Activated CD8-positive, alpha-beta T cell treated with anti-CD3 and anti-CD28 coated beads, Interleukin-2, amount 10 ng/mL, durations not matched to agents 7 days and 5 days (primary cell): ENCODE measurements at regions of chr13 and their contacts with region 1.

Region 1: DNA sequence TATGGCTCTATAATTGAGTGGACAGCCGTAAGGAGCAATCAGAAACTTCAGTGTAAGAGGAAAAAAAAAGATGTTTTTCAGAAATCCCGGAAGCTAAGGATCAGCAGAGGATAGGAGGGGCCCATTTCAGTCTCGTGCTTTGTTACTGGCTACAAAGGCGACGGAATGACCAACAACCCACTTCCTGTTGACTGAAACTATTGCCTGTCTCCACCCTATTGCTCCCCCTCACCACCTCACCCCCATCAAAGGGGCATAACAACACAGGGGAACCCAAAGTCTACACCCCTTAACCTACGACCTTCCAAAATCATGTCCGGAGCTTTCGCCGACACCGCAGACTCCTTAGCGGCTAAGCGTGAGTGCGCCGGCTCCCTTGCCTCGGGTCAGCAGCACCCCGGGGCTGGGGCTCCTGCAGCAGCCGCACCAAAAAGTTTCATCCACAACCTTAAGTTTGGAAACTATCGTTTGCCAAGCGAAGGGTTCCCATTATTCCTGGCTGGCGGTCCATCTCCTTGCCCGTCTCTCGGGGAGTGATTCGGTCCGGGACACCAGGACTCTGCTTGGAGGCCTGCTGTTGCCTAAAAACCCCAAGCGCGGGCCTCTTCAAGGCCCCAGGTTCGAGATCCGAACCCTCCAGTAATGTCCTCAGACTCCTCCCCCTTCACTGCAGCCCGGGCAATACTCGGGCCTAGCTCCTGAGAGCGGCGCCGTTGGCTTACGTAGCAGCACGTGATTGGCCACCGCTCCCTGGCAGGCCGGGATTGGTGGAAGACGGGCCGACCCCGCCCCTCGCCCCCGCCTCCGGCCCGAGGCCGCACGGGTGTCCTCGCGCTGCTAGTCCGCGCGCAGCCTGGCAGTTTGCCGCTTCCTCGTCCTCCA is at the start of gene TPP2:
- DNase-seq: peak; percentile 98
- ATAC-seq: peak; percentile 92
- H3K4me3 Mint-ChIP-seq: peak within 1 kb of the TSS; percentile 99
- H3K27ac Mint-ChIP-seq: peak within 1 kb of the TSS; percentile 100
- H3K4me1 Mint-ChIP-seq: peaks cover 60% of the 10 kb centered on the region
- H3K27me3 Mint-ChIP-seq: no peaks in the 10 kb centered on the region
- total RNA-seq, gene TPP2: 77.8 to 85.4 TPM

Region 2: DNA sequence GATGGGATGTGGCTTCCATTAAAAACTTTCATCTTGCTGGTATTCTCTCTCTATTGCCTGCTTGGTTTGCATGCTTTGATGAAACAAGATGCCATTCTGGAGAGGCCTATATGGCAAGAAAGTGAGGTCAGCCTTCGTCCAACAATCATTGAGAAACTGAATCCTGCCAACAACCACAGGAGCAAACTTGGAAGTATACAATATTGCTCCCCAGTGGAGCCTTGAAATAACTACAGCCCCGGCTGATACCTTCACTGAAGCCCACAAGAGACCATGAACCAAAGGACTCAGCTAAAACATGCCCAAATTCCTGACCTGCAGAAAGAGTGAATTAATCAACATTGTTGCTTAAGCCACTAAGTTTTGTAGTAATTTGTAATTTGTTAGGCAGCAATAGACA is 112.1 kb before region 1 on chr13:
- CTCF ChIA-PET with region 1: no interaction called
- POLR2A ChIA-PET with region 1: no interaction called
- DNase-seq: no peak
- ATAC-seq: no peak
- H3K4me3 Mint-ChIP-seq: no peak overlapping the region
- H3K27ac Mint-ChIP-seq: no peak overlapping the region
- H3K4me1 Mint-ChIP-seq: no peaks in the 10 kb centered on the region
- H3K27me3 Mint-ChIP-seq: peaks cover 5% of the 10 kb centered on the region

Region 3: DNA sequence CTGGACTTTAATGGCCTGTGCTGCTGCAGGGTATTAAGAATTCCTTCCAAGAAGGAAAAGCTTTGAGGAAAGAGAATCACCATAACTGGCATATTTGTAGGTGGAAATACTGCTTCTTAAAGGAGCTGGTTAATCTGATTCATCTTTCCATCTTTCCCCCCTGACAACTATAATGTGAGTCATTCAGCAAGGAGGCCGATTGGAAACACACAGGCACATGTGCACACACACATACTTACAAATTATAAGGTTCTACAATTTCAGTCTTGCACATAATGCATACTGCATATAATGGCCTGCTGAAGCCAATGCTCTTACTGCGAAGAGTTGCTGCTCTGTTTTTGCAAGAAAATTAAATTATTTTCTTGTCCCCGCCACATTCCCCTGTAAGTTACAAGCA is 78.4 kb before region 1 on chr13:
- CTCF ChIA-PET with region 1: no interaction called
- POLR2A ChIA-PET with region 1: no interaction called
- DNase-seq: no peak
- ATAC-seq: no peak
- H3K4me3 Mint-ChIP-seq: no peak overlapping the region
- H3K27ac Mint-ChIP-seq: no peak overlapping the region
- H3K4me1 Mint-ChIP-seq: no peaks in the 10 kb centered on the region
- H3K27me3 Mint-ChIP-seq: no peaks in the 10 kb centered on the region

Region 4: DNA sequence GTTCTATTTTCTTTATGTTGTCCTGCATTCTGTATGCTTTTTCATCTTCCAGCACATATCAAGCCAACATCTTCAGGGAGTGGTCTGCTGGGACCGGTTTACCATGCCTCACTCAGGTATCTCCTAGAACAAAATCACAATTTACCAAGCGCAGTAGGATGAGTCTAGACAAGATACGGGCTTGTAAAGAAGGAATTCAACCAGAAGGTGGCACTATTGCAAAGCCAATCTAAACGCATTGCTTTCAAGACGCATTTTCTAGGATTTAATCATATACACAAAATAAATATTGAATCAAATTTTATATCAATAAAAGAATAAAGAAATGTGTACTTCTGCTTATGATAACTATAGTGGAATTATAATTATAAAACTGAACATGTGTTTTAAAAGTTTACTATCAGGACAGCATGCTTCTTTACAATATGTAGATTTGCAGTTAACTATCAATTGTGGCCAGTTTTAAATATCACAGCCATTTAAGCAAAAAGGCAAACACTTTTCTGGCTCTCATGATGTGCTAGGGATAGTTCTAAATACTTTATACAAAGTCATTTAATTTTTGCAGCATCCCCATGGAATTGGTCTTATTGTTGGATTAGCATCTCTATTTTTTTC is 15.7 kb before region 1 on chr13:
- CTCF ChIA-PET with region 1: interaction called, 50 read pairs
- POLR2A ChIA-PET with region 1: interaction called, 9 read pairs
- DNase-seq: peak; percentile 66
- ATAC-seq: peak; percentile 81
- H3K4me3 Mint-ChIP-seq: no peak overlapping the region
- H3K27ac Mint-ChIP-seq: no peak overlapping the region
- H3K4me1 Mint-ChIP-seq: peaks cover 21% of the 10 kb centered on the region
- H3K27me3 Mint-ChIP-seq: peaks cover 8% of the 10 kb centered on the region

Region 5: GRCh38 chr13:102620516-102620915 is 24.1 kb after region 1 on chr13:
- CTCF ChIA-PET with region 1: interaction called, 10 read pairs
- POLR2A ChIA-PET with region 1: interaction called, 8 read pairs
- DNase-seq: no peak
- ATAC-seq: no peak
- H3K4me3 Mint-ChIP-seq: no peak overlapping the region
- H3K27ac Mint-ChIP-seq: no peak overlapping the region
- H3K4me1 Mint-ChIP-seq: no peaks in the 10 kb centered on the region
- H3K27me3 Mint-ChIP-seq: no peaks in the 10 kb centered on the region

Region 6: GRCh38 chr13:102773441-102774215 is 177.2 kb after region 1 on chr13 and contains the start of gene TEX30:
- CTCF ChIA-PET with region 1: interaction called, 10 read pairs
- POLR2A ChIA-PET with region 1: interaction called, 25 read pairs
- DNase-seq: peak; percentile 89
- ATAC-seq: peak; percentile 96
- H3K4me3 Mint-ChIP-seq: peak within 1 kb of the TSS; percentile 84
- H3K27ac Mint-ChIP-seq: peak within 1 kb of the TSS; percentile 92
- H3K4me1 Mint-ChIP-seq: peaks cover 63% of the 10 kb centered on the region
- H3K27me3 Mint-ChIP-seq: no peaks in the 10 kb centered on the region
- total RNA-seq, gene TEX30: 40.1 to 43.3 TPM

Region 7: DNA sequence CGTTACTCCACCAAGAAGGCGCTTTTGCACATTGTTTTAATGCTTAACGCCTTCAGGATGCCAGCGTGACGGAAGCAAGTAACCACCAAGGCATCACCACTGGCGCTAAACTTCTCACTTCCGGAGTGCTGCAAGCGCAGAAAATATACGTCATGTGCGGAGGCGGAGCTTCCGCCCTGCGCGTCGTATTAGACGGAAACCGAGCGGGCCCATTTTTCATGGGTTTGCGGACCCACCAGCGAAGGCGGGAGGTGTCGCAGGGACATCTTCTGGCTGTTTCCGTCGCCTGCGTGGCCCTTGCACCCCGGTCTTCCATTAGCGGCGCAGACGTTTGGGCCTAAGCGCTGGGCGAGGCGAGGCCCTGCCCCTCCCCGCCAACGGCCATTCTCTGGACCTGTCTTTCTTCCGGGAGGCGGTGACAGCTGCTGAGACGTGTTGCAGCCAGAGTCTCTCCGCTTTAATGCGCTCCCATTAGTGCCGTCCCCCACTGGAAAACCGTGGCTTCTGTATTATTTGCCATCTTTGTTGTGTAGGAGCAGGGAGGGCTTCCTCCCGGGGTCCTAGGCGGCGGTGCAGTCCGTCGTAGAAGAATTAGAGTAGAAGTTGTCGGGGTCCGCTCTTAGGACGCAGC is 249.4 kb after region 1 on chr13 and contains the start of gene ERCC5:
- CTCF ChIA-PET with region 1: interaction called, 39 read pairs
- POLR2A ChIA-PET with region 1: interaction called, 98 read pairs
- DNase-seq: peak; percentile 97
- ATAC-seq: peak; percentile 85
- H3K4me3 Mint-ChIP-seq: peak within 1 kb of the TSS; percentile 87
- H3K27ac Mint-ChIP-seq: peak within 1 kb of the TSS; percentile 93
- H3K4me1 Mint-ChIP-seq: peaks cover 37% of the 10 kb centered on the region
- H3K27me3 Mint-ChIP-seq: no peaks in the 10 kb centered on the region
- total RNA-seq, gene ERCC5: 66.8 to 68.0 TPM